Right ventricle myocardium inferior (tissue), 1 donor: ENCODE measurements at regions of chr12 and their contacts with region 1.

Region 1: GRCh38 chr12:56688129-56688845 is at the start of gene PTGES3:
- DNase-seq: peak; percentile 99
- ATAC-seq: peak; percentile 96
- total RNA-seq, gene PTGES3: 132 TPM

Region 2: GRCh38 chr12:56645717-56646446 is 42.4 kb before region 1 on chr12 and contains the start of gene ATP5F1B:
- intact Hi-C with region 1: loop called (anchors 5 kb)
- DNase-seq: peak; percentile 97
- ATAC-seq: peak; percentile 98
- total RNA-seq, gene ATP5F1B: 3,152 TPM